BJ (cell line): ENCODE measurements at regions of chr13 and their contacts with region 1.

Region 1: GRCh38 chr13:31199849-31200636 is at the start of gene B3GLCT:
- DNase-seq: no peak
- H3K4me3 ChIP-seq: peak within 1 kb of the TSS; percentile 72
- H3K27me3 ChIP-seq: no peaks in the 10 kb centered on the region
- CTCF ChIP-seq: peak; percentile 51
- polyA plus RNA-seq, gene B3GLCT: 3.3 and 4.5 TPM in 2 replicates

Region 2: DNA sequence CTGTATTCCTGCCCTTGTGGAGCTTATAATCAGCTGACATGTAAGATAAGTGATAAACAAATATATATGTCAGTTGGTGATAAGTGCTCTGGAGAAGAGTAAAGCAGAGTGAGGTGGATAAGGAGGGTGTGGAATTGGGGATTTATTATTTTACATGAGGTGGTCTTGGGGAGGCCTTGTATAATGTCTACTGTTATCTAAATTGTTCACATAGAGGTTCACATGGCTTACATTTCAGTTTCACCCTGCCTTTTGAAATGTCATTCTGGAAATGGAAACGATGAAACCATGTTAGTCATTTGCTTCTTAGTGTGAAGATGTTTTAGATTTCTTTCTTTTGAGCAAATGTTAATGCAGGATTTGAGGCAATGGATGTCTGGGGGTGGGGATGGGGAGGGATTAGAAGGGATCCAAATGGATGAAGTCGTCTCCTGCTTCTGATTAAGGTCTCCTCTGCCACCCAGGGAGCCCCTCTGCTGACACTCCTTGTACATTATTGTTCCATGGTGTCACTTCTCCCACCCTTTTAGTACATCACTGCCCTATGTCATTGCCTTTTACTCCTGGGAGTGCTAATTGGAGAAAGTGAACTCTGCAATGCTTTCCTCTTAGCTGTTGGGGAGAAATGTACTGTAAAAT is 13.7 kb after region 1 on chr13:
- CTCF ChIA-PET with region 1: interaction called, 11 read pairs
- POLR2A ChIA-PET with region 1: no interaction called
- DNase-seq: no peak
- H3K4me3 ChIP-seq: no peak overlapping the region
- H3K27me3 ChIP-seq: no peaks in the 10 kb centered on the region
- CTCF ChIP-seq: no peak